Mammary epithelial cell (primary cell): ENCODE measurements at regions of chr19 and their contacts with region 1.

Region 1: GRCh38 chr19:10587022-10587789 is at the start of gene AP1M2:
- DNase-seq: peak; percentile 61
- H3K4me3 ChIP-seq: peak within 1 kb of the TSS; percentile 71 to 98 (median 90)
- H3K27ac ChIP-seq: peak within 1 kb of the TSS; percentile 32
- H3K4me1 ChIP-seq: no peaks in the 10 kb centered on the region
- H3K27me3 ChIP-seq: no peaks in the 10 kb centered on the region
- CTCF ChIP-seq: no peak
- total RNA-seq, gene AP1M2: 86.3 to 119 TPM

Region 2: GRCh38 chr19:10517760-10518443 is 69.3 kb before region 1 on chr19:
- CTCF ChIA-PET with region 1: no interaction called
- dilution Hi-C with region 1: no loop called
- in situ Hi-C with region 1: no loop called
- intact Hi-C with region 1: no loop called
- DNase-seq: no peak
- H3K4me3 ChIP-seq: peak overlapping the region; percentile 65 to 69 (median 66)
- H3K27ac ChIP-seq: no peak overlapping the region
- H3K4me1 ChIP-seq: peaks cover 24% of the 10 kb centered on the region
- H3K27me3 ChIP-seq: no peaks in the 10 kb centered on the region
- CTCF ChIP-seq: no peak

Region 3: GRCh38 chr19:10625003-10625776 is 38.0 kb after region 1 on chr19 and contains the start of gene SLC44A2:
- CTCF ChIA-PET with region 1: no interaction called
- dilution Hi-C with region 1: no loop called
- in situ Hi-C with region 1: no loop called
- intact Hi-C with region 1: loop called (anchors 5 kb)
- DNase-seq: peak; percentile 77
- H3K4me3 ChIP-seq: peak within 1 kb of the TSS; percentile 74 to 88 (median 77)
- H3K27ac ChIP-seq: peak within 1 kb of the TSS; percentile 40
- H3K4me1 ChIP-seq: peaks cover 20% of the 10 kb centered on the region
- H3K27me3 ChIP-seq: no peaks in the 10 kb centered on the region
- CTCF ChIP-seq: no peak
- total RNA-seq, gene SLC44A2: 64.8 to 87.9 TPM